ENCODE measurements at regions of chr12 and their contacts with region 1.

Region 1: GRCh38 chr12:15220994-15221885 is at the start of gene RERG:
- DNase-seq: peak; percentile 35 to 87 (median 67)
- ATAC-seq: peak; percentile 96
- H3K4me3 ChIP-seq: peak within 1 kb of the TSS; percentile 42 to 46
- H3K4me3 Mint-ChIP-seq: peak within 1 kb of the TSS; percentile 76
- H3K27ac ChIP-seq: no peak within 1 kb of the TSS
- H3K27ac Mint-ChIP-seq: no peak within 1 kb of the TSS
- H3K4me1 ChIP-seq: peaks cover 7% of the 10 kb centered on the region
- H3K4me1 Mint-ChIP-seq: peaks cover 15% of the 10 kb centered on the region
- H3K27me3 ChIP-seq: peaks cover 0 to 3% of the 10 kb centered on the region in 2 experiments
- H3K27me3 Mint-ChIP-seq: peaks cover 22% of the 10 kb centered on the region
- CTCF ChIP-seq: peak; percentile 84
- total RNA-seq, gene RERG: not detected

Region 2: GRCh38 chr12:14723763-14724162 is 497.5 kb before region 1 on chr12:
- CTCF ChIA-PET with region 1: interaction called, 21 read pairs
- POLR2A ChIA-PET with region 1: no interaction called
- intact Hi-C with region 1: loop called (anchors 1 kb)
- DNase-seq: peak; percentile 10 to 79 (median 56)
- ATAC-seq: peak; percentile 80
- H3K4me3 ChIP-seq: no peak overlapping the region
- H3K4me3 Mint-ChIP-seq: no peak overlapping the region
- H3K27ac ChIP-seq: no peak overlapping the region
- H3K27ac Mint-ChIP-seq: no peak overlapping the region
- H3K4me1 ChIP-seq: no peaks in the 10 kb centered on the region
- H3K4me1 Mint-ChIP-seq: no peaks in the 10 kb centered on the region
- H3K27me3 ChIP-seq: peaks cover 0 to 2% of the 10 kb centered on the region in 2 experiments
- H3K27me3 Mint-ChIP-seq: peaks cover 12% of the 10 kb centered on the region
- CTCF ChIP-seq: peak; percentile 77

Region 3: DNA sequence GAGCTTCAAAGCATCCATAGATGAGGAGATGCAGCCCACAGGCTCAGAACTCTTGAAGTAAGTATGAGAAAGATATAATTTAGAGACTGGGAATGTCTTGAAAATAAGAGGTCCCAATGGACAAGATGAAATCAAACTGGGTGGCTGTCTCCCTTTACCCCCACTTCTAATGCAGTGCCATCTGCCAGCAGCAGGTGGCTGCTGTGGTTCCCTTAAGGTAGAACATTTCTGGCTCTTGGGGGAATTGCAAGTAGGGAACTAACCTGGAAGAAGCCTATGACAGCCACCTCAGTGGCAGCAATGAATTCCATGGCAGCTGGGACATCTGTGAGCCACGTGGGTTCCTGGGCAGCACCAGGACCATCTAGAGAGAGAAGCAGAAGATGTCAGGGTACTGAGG is 283.6 kb before region 1 on chr12:
- CTCF ChIA-PET with region 1: no interaction called
- POLR2A ChIA-PET with region 1: no interaction called
- intact Hi-C with region 1: loop called in 1 of 2 experiments (anchors 5 kb)
- DNase-seq: peak in 2 of 9 experiments; percentile 58 to 66
- ATAC-seq: peak; percentile 58
- H3K4me3 ChIP-seq: no peak overlapping the region
- H3K4me3 Mint-ChIP-seq: no peak overlapping the region
- H3K27ac ChIP-seq: peak overlapping the region in 1 of 2 experiments; percentile 55
- H3K27ac Mint-ChIP-seq: peak overlapping the region; percentile 85
- H3K4me1 ChIP-seq: peaks cover 38% of the 10 kb centered on the region
- H3K4me1 Mint-ChIP-seq: peaks cover 74% of the 10 kb centered on the region
- H3K27me3 ChIP-seq: no peaks in the 10 kb centered on the region
- H3K27me3 Mint-ChIP-seq: no peaks in the 10 kb centered on the region
- CTCF ChIP-seq: peak; percentile 40

Region 4: GRCh38 chr12:15151161-15152120 is 69.8 kb before region 1 on chr12:
- CTCF ChIA-PET with region 1: interaction called, 3 read pairs
- POLR2A ChIA-PET with region 1: no interaction called
- intact Hi-C with region 1: loop called in 1 of 2 experiments (anchors 2 kb)
- DNase-seq: peak in 2 of 9 experiments; percentile 1 to 10
- ATAC-seq: no peak
- H3K4me3 ChIP-seq: no peak overlapping the region
- H3K4me3 Mint-ChIP-seq: no peak overlapping the region
- H3K27ac ChIP-seq: no peak overlapping the region
- H3K27ac Mint-ChIP-seq: no peak overlapping the region
- H3K4me1 ChIP-seq: no peaks in the 10 kb centered on the region
- H3K4me1 Mint-ChIP-seq: no peaks in the 10 kb centered on the region
- H3K27me3 ChIP-seq: no peaks in the 10 kb centered on the region
- H3K27me3 Mint-ChIP-seq: peaks cover 18% of the 10 kb centered on the region
- CTCF ChIP-seq: peak; percentile 16

Region 5: GRCh38 chr12:15208125-15208524 is 13.1 kb before region 1 on chr12:
- CTCF ChIA-PET with region 1: interaction called, 16 read pairs
- POLR2A ChIA-PET with region 1: no interaction called
- intact Hi-C with region 1: no loop called
- DNase-seq: no peak
- ATAC-seq: no peak
- H3K4me3 ChIP-seq: no peak overlapping the region
- H3K4me3 Mint-ChIP-seq: no peak overlapping the region
- H3K27ac ChIP-seq: no peak overlapping the region
- H3K27ac Mint-ChIP-seq: no peak overlapping the region
- H3K4me1 ChIP-seq: no peaks in the 10 kb centered on the region
- H3K4me1 Mint-ChIP-seq: no peaks in the 10 kb centered on the region
- H3K27me3 ChIP-seq: peaks cover 0 to 7% of the 10 kb centered on the region in 2 experiments
- H3K27me3 Mint-ChIP-seq: peaks cover 16% of the 10 kb centered on the region
- CTCF ChIP-seq: no peak

Region 6: DNA sequence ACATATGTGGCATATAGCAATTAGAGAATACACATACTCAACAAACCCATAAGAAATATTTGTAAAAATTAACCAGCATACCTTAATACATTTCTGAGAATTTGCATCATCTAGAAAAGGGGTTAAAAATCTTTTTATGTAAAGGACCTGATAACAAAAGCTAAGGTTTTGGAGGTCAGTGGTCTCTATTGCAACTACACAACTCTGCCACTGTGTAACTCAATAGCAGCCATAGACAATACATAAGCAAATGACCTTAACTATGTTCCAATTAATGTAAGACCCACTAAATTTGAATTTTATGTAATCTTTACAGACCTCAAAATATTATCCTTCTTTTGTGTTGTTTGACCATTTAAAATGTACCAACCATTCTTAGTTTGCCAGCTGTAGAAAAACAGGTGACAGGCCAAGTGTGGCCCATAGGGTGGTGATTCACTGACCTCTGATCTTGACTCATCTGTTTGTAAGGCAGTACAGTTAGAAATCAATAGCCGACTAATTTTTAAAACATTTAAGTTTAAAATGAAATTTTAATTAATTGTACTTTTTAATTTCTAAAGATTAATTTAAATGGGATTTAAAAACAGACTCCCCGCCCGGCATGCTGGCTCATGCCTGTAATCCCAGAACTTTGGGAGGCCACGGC is 575.4 kb after region 1 on chr12:
- CTCF ChIA-PET with region 1: no interaction called
- POLR2A ChIA-PET with region 1: no interaction called
- intact Hi-C with region 1: no loop called
- DNase-seq: no peak
- ATAC-seq: no peak
- H3K4me3 ChIP-seq: no peak overlapping the region
- H3K4me3 Mint-ChIP-seq: no peak overlapping the region
- H3K27ac ChIP-seq: no peak overlapping the region
- H3K27ac Mint-ChIP-seq: no peak overlapping the region
- H3K4me1 ChIP-seq: no peaks in the 10 kb centered on the region
- H3K4me1 Mint-ChIP-seq: no peaks in the 10 kb centered on the region
- H3K27me3 ChIP-seq: peaks cover 0 to 2% of the 10 kb centered on the region in 2 experiments
- H3K27me3 Mint-ChIP-seq: peaks cover 16% of the 10 kb centered on the region
- CTCF ChIP-seq: no peak

Measured in CD8-positive, alpha-beta T cell (primary cell).